GM12878 (cell line): ENCODE measurements at regions of chr22 and their contacts with region 1.

Region 1: DNA sequence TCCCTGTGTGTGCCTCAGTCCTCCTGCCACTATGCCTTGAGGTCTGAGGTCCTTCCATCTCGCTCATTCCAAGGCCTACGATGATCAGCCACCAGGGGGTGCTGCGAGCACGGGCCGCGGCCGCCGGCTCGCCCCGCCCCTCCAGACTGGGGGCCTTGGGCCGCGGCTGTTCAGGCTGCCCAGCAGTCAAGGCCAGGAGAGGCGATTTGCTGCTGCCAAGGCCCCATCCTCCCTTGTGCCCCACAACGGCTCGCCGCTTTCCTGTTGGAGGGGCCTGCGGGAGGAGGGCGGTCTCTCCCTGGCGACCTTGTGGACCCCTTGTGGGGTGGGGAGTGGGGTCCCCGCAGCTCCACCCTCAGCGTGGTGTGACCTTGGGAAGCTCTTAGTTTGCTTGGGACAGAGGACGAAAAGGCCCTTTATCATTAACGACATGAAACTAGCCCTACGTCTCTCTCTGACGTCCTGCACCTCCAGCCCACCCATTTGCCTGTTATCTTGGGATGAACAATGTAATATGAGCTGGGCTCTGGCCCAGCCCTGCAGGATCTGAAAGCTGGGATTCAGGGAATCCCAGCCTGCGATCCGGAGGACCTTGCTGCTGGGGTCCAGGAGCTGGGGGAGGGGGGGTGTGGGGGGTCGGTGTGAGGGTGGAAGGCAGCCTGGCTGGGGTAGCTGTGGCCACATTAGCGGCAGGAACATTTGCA is 5.3 kb upstream of the GALR3 start:
- DNase-seq: no peak
- ATAC-seq: peak; percentile 96
- H3K4me3 ChIP-seq: peak overlapping the region; percentile 37; the same call in 1 of the 2 replicates
- H3K27ac ChIP-seq: no peak overlapping the region
- H3K4me1 ChIP-seq: peaks cover 10% of the 10 kb centered on the region
- H3K27me3 ChIP-seq: peaks cover 0 to 2% of the 10 kb centered on the region in 2 experiments; a peak in 2 of 4 replicates
- CTCF ChIP-seq: peak; percentile 90 to 97 (median 92)
- EP300 ChIP-seq: no peak
- POLR2A ChIP-seq: peak; percentile 38; the same call in 1 of the 2 replicates
- RAD21 ChIP-seq: peak; percentile 82

Region 2: GRCh38 chr22:37794381-37794780 is 23.5 kb before region 1 on chr22:
- CTCF ChIA-PET with region 1: no interaction called
- POLR2A ChIA-PET with region 1: no interaction called
- RAD21 ChIA-PET with region 1: no interaction called
- SMC1A ChIA-PET with region 1: no interaction called
- in situ Hi-C with region 1: no loop called
- intact Hi-C with region 1: no loop called
- DNase-seq: no peak
- ATAC-seq: no peak
- H3K4me3 ChIP-seq: no peak overlapping the region
- H3K27ac ChIP-seq: no peak overlapping the region
- H3K4me1 ChIP-seq: peaks cover 5% of the 10 kb centered on the region; the same call in 1 of the 2 replicates
- H3K27me3 ChIP-seq: no peaks in the 10 kb centered on the region
- CTCF ChIP-seq: no peak
- EP300 ChIP-seq: no peak
- POLR2A ChIP-seq: no peak
- RAD21 ChIP-seq: no peak

Region 3: DNA sequence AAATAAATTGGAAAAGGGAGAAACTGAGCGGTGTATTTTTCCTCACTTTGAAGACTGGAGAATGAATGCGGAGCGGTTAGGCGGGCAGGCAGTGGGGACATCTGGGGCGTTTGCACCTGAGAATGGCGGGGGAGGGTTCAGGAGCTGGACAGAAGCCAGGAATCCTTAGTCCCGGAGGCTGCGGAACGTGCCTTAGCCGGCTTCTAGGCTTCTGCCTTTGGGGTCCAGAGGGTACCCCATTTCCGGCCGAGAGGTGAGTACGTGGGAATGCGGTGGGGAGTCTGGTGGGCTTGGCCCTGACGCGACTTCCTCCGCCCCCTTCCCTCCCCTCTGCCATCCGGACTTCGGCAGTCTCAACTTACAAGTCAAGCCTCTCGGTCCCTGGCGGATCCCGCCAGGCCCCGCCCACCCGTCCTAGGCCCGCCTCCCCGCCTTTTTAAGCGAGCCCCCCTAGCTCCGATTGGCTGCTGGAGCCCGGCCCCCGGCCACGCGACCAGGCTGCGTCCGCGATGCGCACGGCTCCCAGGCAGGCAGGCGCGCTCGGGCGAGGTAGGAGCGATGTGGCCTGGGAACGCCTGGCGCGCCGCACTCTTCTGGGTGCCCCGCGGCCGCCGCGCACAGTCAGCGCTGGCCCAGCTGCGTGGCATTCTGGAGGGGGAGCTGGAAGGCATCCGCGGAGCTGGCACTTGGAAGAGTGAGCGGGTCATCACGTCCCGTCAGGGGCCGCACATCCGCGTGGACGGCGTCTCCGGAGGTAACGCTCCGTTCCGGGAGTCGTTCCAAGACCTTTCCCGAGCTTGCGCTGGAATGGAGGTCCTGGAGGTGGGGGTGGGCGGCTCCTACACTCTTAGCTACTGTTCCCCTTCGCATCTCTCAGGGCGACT is 10.2 kb before region 1 on chr22 and contains the start of gene GCAT:
- CTCF ChIA-PET with region 1: interaction called, 47 read pairs
- POLR2A ChIA-PET with region 1: interaction called, 7 read pairs
- RAD21 ChIA-PET with region 1: interaction called, 13 read pairs
- SMC1A ChIA-PET with region 1: no interaction called
- in situ Hi-C with region 1: no loop called
- intact Hi-C with region 1: no loop called
- DNase-seq: peak; percentile 58
- ATAC-seq: peak; percentile 99
- H3K4me3 ChIP-seq: peak within 1 kb of the TSS; percentile 70
- H3K27ac ChIP-seq: no peak within 1 kb of the TSS
- H3K4me1 ChIP-seq: peaks cover 5% of the 10 kb centered on the region
- H3K27me3 ChIP-seq: peaks cover 12 to 33% of the 10 kb centered on the region in 2 experiments
- CTCF ChIP-seq: no peak
- EP300 ChIP-seq: no peak
- POLR2A ChIP-seq: peak; percentile 88
- RAD21 ChIP-seq: no peak
- polyA plus RNA-seq, gene GCAT: 0.95 to 2.4 TPM

Region 4: GRCh38 chr22:37855462-37855861 is 37.6 kb after region 1 on chr22:
- CTCF ChIA-PET with region 1: interaction called, 14 read pairs
- POLR2A ChIA-PET with region 1: no interaction called
- RAD21 ChIA-PET with region 1: interaction called, 3 read pairs
- SMC1A ChIA-PET with region 1: interaction called, 3 read pairs
- in situ Hi-C with region 1: loop called (anchors 5 kb)
- intact Hi-C with region 1: no loop called
- DNase-seq: no peak
- ATAC-seq: no peak
- H3K4me3 ChIP-seq: no peak overlapping the region
- H3K27ac ChIP-seq: no peak overlapping the region
- H3K4me1 ChIP-seq: no peaks in the 10 kb centered on the region; the same call in 1 of the 2 replicates
- H3K27me3 ChIP-seq: no peaks in the 10 kb centered on the region
- CTCF ChIP-seq: no peak
- EP300 ChIP-seq: no peak
- POLR2A ChIP-seq: no peak
- RAD21 ChIP-seq: no peak

Region 5: DNA sequence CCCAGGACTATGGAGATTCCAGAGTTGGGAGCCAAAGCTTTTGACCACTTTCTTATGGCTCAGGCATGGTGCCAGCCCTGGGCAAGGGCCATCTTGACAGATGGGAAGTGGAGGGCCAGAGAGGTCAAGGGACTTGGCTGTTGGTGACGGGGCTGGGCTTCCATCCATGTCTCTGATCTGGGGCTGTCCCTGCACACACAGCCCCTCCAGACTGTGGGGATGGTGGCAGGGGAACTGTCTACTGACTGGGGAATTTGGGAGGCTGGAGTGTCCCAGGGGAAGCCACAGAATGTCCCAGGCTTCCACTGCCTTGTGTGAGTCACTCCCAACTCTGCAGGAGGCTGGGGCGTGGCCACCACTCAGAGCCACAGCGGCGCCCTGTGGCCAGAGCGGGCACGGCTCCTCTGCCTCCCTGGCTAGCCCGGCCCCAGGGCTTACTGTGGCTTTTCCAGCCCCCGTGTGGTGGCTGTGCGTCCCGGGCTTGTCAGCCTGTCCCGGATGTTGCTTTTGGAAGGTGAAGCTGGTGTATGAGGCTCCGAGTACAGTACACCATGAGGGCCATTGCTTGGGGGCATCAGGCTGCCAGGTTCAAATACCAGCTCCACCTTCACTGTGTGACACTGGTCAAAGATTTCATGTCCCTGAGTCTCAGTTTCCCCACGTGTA is 116.0 kb after region 1 on chr22:
- CTCF ChIA-PET with region 1: interaction called, 9 read pairs
- POLR2A ChIA-PET with region 1: no interaction called
- RAD21 ChIA-PET with region 1: interaction called, 3 read pairs
- SMC1A ChIA-PET with region 1: interaction called, 3 read pairs
- in situ Hi-C with region 1: no loop called
- intact Hi-C with region 1: loop called (anchors 5 kb)
- DNase-seq: peak; percentile 28
- ATAC-seq: peak; percentile 100
- H3K4me3 ChIP-seq: no peak overlapping the region
- H3K27ac ChIP-seq: no peak overlapping the region
- H3K4me1 ChIP-seq: peaks cover 10% of the 10 kb centered on the region
- H3K27me3 ChIP-seq: no peaks in the 10 kb centered on the region
- CTCF ChIP-seq: peak; percentile 98; a peak in 5 of 6 replicates
- EP300 ChIP-seq: no peak
- POLR2A ChIP-seq: no peak
- RAD21 ChIP-seq: peak; percentile 60

Region 6: GRCh38 chr22:37965940-37966664 is 148.2 kb after region 1 on chr22:
- CTCF ChIA-PET with region 1: interaction called, 59 read pairs
- POLR2A ChIA-PET with region 1: no interaction called
- RAD21 ChIA-PET with region 1: interaction called, 3 read pairs
- SMC1A ChIA-PET with region 1: interaction called, 4 read pairs
- in situ Hi-C with region 1: loop called (anchors 5 kb)
- intact Hi-C with region 1: loop called (anchors 1 kb)
- DNase-seq: no peak
- ATAC-seq: no peak
- H3K4me3 ChIP-seq: no peak overlapping the region
- H3K27ac ChIP-seq: no peak overlapping the region
- H3K4me1 ChIP-seq: no peaks in the 10 kb centered on the region
- H3K27me3 ChIP-seq: no peaks in the 10 kb centered on the region
- CTCF ChIP-seq: no peak
- EP300 ChIP-seq: no peak
- POLR2A ChIP-seq: no peak
- RAD21 ChIP-seq: no peak